ENCODE measurements at regions of chrX and their contacts with region 1.

Region 1: GRCh38 chrX:31237189-31237588 is 165.3 kb upstream of the FTHL17 start:
- DNase-seq: no peak
- ATAC-seq: peak; percentile 48
- H3K4me3 Mint-ChIP-seq: no peak overlapping the region
- H3K27ac Mint-ChIP-seq: peak overlapping the region; percentile 41
- H3K4me1 Mint-ChIP-seq: peaks cover 64% of the 10 kb centered on the region
- H3K27me3 Mint-ChIP-seq: no peaks in the 10 kb centered on the region
- CTCF ChIP-seq: no peak

Region 2: DNA sequence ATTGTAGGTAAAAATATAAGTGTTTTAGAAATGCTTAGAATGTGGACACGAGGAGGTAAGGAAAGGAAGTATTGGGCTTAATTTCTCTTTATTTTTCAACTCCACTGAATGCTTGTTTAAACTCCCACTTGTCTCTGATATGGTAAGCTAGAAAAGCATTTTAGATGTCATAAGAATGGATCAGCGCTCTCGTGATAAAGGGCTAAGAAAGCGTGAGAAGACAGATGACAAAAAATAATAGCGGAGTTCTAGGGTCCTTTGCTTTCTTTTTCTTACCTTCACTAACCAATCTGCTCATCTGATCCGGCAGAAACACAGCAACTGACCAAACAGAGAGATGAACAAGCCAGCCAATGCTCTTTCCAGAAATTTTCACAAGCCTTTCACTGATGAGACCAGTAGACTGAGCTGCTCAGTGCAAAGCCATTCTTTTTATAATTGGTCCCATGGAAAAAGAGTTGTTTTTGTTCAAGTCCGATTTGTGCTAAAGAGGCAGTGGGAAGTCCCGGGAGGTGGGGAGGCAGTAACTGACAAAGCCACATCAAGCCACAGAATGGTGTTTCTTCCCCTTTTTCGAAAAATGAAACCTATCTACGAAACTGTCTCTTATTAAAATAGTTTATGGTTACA is 659.7 kb before region 1 on chrX and contains the start of gene TASL:
- CTCF ChIA-PET with region 1: no interaction called
- POLR2A ChIA-PET with region 1: no interaction called
- intact Hi-C with region 1: loop called (anchors 5 kb)
- DNase-seq: peak; percentile 17
- ATAC-seq: peak; percentile 84
- H3K4me3 Mint-ChIP-seq: peak within 1 kb of the TSS; percentile 93
- H3K27ac Mint-ChIP-seq: peak within 1 kb of the TSS; percentile 96
- H3K4me1 Mint-ChIP-seq: peaks cover 37% of the 10 kb centered on the region
- H3K27me3 Mint-ChIP-seq: no peaks in the 10 kb centered on the region
- CTCF ChIP-seq: no peak
- total RNA-seq, gene TASL: 27.0 and 27.7 TPM in 2 replicates

Region 3: DNA sequence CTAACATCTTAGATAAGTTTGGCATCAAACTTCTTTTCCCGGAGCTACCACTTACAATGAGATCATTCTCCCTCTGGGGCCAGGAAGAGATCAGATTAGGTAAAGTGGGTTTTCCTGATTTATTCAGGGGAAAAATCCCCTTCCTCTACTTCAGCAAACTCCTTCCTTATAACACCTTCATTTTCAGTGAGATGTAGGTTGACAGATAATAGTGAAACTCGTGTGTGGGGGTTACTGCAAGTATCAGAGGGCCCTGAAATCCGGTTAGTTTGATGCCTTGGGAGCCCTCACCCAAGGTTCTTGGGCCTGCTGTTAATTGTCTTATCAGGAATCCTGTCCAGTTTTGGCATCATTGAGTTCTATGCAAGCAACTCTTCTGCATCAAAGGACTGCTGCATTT is 176.1 kb before region 1 on chrX:
- CTCF ChIA-PET with region 1: no interaction called
- POLR2A ChIA-PET with region 1: no interaction called
- intact Hi-C with region 1: no loop called
- DNase-seq: no peak
- ATAC-seq: no peak
- H3K4me3 Mint-ChIP-seq: no peak overlapping the region
- H3K27ac Mint-ChIP-seq: no peak overlapping the region
- H3K4me1 Mint-ChIP-seq: no peaks in the 10 kb centered on the region
- H3K27me3 Mint-ChIP-seq: no peaks in the 10 kb centered on the region
- CTCF ChIP-seq: no peak

Region 4: GRCh38 chrX:31223817-31224216 is 13.4 kb before region 1 on chrX:
- CTCF ChIA-PET with region 1: interaction called, 3 read pairs
- POLR2A ChIA-PET with region 1: interaction called, 12 read pairs
- intact Hi-C with region 1: no loop called
- DNase-seq: no peak
- ATAC-seq: peak; percentile 78
- H3K4me3 Mint-ChIP-seq: peak overlapping the region; percentile 39
- H3K27ac Mint-ChIP-seq: peak overlapping the region; percentile 69
- H3K4me1 Mint-ChIP-seq: peaks cover 30% of the 10 kb centered on the region
- H3K27me3 Mint-ChIP-seq: no peaks in the 10 kb centered on the region
- CTCF ChIP-seq: no peak

Region 5: GRCh38 chrX:31706466-31706865 is 469.3 kb after region 1 on chrX:
- CTCF ChIA-PET with region 1: no interaction called
- POLR2A ChIA-PET with region 1: no interaction called
- intact Hi-C with region 1: no loop called
- DNase-seq: no peak
- ATAC-seq: no peak
- H3K4me3 Mint-ChIP-seq: no peak overlapping the region
- H3K27ac Mint-ChIP-seq: no peak overlapping the region
- H3K4me1 Mint-ChIP-seq: no peaks in the 10 kb centered on the region
- H3K27me3 Mint-ChIP-seq: no peaks in the 10 kb centered on the region
- CTCF ChIP-seq: no peak